ENCODE measurements at regions of chr5 and their contacts with region 1.

Region 1: DNA sequence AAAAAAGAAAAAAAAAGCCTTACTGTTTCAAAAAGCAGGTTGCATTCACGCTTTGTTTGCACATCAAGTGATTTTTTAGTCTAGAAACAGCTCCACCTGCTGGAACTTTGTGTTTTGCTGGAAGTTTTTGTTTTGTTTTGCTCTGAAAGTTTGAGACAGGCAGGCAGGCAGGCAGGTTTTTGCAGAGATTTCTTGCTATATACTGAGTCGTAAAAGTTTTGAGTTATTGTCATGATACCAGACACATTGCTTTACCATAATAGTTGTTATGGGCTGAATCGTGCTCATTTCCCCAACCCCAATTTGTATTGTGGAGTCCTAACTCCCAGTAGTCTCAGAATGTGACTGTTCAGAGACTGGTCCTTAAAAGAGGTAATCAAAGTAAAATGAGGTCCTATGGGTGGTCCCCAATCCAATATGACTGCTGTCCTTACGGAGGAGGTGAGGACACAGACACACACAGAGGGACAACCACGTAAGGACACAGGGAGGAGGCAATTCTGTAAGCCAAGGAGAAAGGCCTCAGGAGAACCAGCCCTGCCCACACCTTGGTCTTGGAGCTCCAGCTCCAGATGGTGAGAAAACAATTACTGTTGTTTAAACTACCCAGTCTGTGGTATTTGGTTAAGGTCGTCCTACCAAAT is 20.9 kb downstream of the OR2Y1 start:
- DNase-seq: peak; percentile 72
- ATAC-seq: peak; percentile 27
- H3K4me3 Mint-ChIP-seq: no peak overlapping the region
- H3K27ac Mint-ChIP-seq: no peak overlapping the region
- H3K4me1 Mint-ChIP-seq: peaks cover 25% of the 10 kb centered on the region
- H3K27me3 Mint-ChIP-seq: peaks cover 3% of the 10 kb centered on the region

Region 2: GRCh38 chr5:180689071-180689694 is 29.7 kb before region 1 on chr5:
- CTCF ChIA-PET with region 1: interaction called, 19 read pairs
- POLR2A ChIA-PET with region 1: interaction called, 3 read pairs
- DNase-seq: peak; percentile 65
- ATAC-seq: peak; percentile 90
- H3K4me3 Mint-ChIP-seq: peak overlapping the region; percentile 65
- H3K27ac Mint-ChIP-seq: peak overlapping the region; percentile 86
- H3K4me1 Mint-ChIP-seq: peaks cover 31% of the 10 kb centered on the region
- H3K27me3 Mint-ChIP-seq: peaks cover 6% of the 10 kb centered on the region

Region 3: GRCh38 chr5:180704368-180704869 is 14.5 kb before region 1 on chr5:
- CTCF ChIA-PET with region 1: interaction called, 14 read pairs
- POLR2A ChIA-PET with region 1: no interaction called
- DNase-seq: no peak
- ATAC-seq: no peak
- H3K4me3 Mint-ChIP-seq: no peak overlapping the region
- H3K27ac Mint-ChIP-seq: no peak overlapping the region
- H3K4me1 Mint-ChIP-seq: no peaks in the 10 kb centered on the region
- H3K27me3 Mint-ChIP-seq: peaks cover 4% of the 10 kb centered on the region

Measured in activated CD8-positive, alpha-beta T cell treated with anti-CD3 and anti-CD28 coated beads, Interleukin-2, amount 10 ng/mL, durations not matched to agents 7 days and 5 days (primary cell).